ENCODE measurements at regions of chr3 and their contacts with region 1.

Region 1: GRCh38 chr3:51799879-51800749 is 21.1 kb upstream of the IQCF6 start:
- DNase-seq: peak; percentile 48
- H3K4me3 ChIP-seq: no peak overlapping the region
- H3K27ac ChIP-seq: no peak overlapping the region
- H3K27me3 ChIP-seq: peaks cover 10% of the 10 kb centered on the region
- CTCF ChIP-seq: peak; percentile 83

Region 2: DNA sequence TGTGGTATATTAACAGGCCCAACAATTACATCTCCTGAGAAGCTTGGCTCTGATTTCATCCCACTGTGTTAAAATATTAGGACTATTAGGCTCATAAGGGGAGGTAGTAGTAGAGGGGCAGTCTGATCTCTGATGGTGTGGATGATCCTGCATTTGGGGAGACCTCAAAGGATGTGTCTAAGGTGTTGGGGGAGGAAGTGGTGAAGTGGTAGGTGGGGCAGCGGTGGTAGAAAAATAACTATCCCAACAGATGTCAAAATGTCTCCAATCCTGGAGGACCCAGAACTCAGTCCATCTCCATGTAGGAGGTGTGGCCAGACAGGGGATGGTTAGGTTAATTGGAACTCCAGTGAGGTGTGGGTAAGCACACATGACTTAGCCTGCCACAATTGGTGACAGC is 10.7 kb before region 1 on chr3:
- CTCF ChIA-PET with region 1: interaction called, 10 read pairs
- POLR2A ChIA-PET with region 1: no interaction called
- DNase-seq: no peak
- H3K4me3 ChIP-seq: no peak overlapping the region
- H3K27ac ChIP-seq: no peak overlapping the region
- H3K27me3 ChIP-seq: peaks cover 17% of the 10 kb centered on the region
- CTCF ChIP-seq: no peak

Region 3: DNA sequence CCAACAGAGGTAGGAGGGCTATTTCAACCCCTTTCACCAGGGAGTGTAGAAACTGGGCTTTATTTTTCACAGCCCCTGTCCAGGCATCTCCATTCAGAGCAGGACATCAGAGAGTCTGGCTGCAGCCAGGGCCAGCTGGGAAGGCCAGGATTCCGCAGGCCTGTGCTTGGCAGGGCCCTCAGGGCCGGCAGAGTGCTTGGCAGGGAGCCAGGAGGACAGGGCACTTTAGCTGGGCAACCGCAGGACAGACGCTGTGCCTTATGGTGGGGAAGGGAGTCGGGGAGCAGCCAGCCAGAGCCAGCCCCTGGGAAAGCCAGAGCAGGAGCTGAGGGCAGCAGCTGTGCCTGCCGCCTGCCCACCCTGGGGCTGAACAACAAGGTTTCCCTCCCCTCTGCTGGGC is 13.4 kb after region 1 on chr3:
- CTCF ChIA-PET with region 1: interaction called, 13 read pairs
- POLR2A ChIA-PET with region 1: no interaction called
- DNase-seq: no peak
- H3K4me3 ChIP-seq: no peak overlapping the region
- H3K27ac ChIP-seq: no peak overlapping the region
- H3K27me3 ChIP-seq: no peaks in the 10 kb centered on the region
- CTCF ChIP-seq: no peak